Heart left ventricle (tissue), 16 donors: ENCODE measurements at regions of chr4 and their contacts with region 1.

Region 1: GRCh38 chr4:53377319-53378170 is at the start of gene FIP1L1:
- DNase-seq: peak; percentile 93 to 98 (median 96)
- ATAC-seq: peak; percentile 99 to 100 (median 100)
- H3K4me3 ChIP-seq: peak within 1 kb of the TSS; percentile 50 to 97 (median 88)
- H3K27ac ChIP-seq: peak within 1 kb of the TSS; percentile 73 to 94 (median 90)
- H3K4me1 ChIP-seq: peaks cover 0 to 26% (median 20%) of the 10 kb centered on the region in 12 donors
- H3K27me3 ChIP-seq: no peaks in the 10 kb centered on the region
- CTCF ChIP-seq: no peak
- POLR2A ChIP-seq: peak in 1 of 2 donors; percentile 77
- total RNA-seq, gene FIP1L1: 23.5 to 46.2 (median 32.8) TPM

Region 2: GRCh38 chr4:52234561-52235440 is 1142.7 kb before region 1 on chr4:
- intact Hi-C with region 1: no loop called
- DNase-seq: no peak
- ATAC-seq: peak; percentile 73 to 86 (median 78)
- H3K4me3 ChIP-seq: peak overlapping the region in 2 of 12 donors; percentile 2 to 6
- H3K27ac ChIP-seq: no peak overlapping the region
- H3K4me1 ChIP-seq: peaks cover 0 to 5% (median 0%) of the 10 kb centered on the region in 12 donors
- H3K27me3 ChIP-seq: peaks cover 0 to 3% (median 0%) of the 10 kb centered on the region in 9 donors
- CTCF ChIP-seq: peak in 11 of 12 donors; percentile 37 to 77 (median 64)
- POLR2A ChIP-seq: no peak

Region 3: GRCh38 chr4:53365486-53366300 is 11.9 kb before region 1 on chr4 and contains the start of gene SCFD2:
- intact Hi-C with region 1: loop called in 1 of 10 experiments (anchors 1 kb)
- DNase-seq: peak; percentile 96 to 98 (median 98)
- ATAC-seq: peak; percentile 100
- H3K4me3 ChIP-seq: peak within 1 kb of the TSS; percentile 60 to 99 (median 88)
- H3K27ac ChIP-seq: peak within 1 kb of the TSS in 11 of 12 donors; percentile 24 to 84 (median 53)
- H3K4me1 ChIP-seq: peaks cover 0 to 47% (median 18%) of the 10 kb centered on the region in 12 donors
- H3K27me3 ChIP-seq: peaks cover 0 to 11% (median 0%) of the 10 kb centered on the region in 9 donors
- CTCF ChIP-seq: no peak
- POLR2A ChIP-seq: peak in 1 of 2 donors; percentile 46
- total RNA-seq, gene SCFD2: 6.5 to 14.0 (median 10.8) TPM

Region 4: DNA sequence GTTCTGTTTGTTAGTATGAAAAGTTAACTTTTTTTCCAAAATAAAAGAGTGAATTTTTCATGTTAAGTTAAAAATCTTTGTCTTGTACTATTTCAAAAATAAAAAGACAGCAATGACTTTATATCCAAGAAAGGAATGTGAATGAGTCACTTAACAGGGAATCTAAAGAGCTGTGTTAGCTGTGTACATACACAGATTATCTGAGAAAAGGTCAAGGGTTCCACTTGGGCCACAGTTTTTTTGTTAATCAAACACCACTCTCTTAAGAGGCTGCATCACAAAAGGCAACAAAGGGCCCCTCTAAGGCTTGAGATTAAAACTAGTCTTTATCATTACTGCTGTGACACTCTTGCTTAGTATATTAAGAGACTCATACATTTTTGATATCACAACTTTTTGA is 82.0 kb after region 1 on chr4:
- intact Hi-C with region 1: loop called in 1 of 10 experiments (anchors 10 kb)
- DNase-seq: no peak
- ATAC-seq: no peak
- H3K4me3 ChIP-seq: no peak overlapping the region
- H3K27ac ChIP-seq: no peak overlapping the region
- H3K4me1 ChIP-seq: no peaks in the 10 kb centered on the region
- H3K27me3 ChIP-seq: no peaks in the 10 kb centered on the region
- CTCF ChIP-seq: no peak
- POLR2A ChIP-seq: no peak